ENCODE measurements at regions of chr2 and their contacts with region 1.

Region 1: DNA sequence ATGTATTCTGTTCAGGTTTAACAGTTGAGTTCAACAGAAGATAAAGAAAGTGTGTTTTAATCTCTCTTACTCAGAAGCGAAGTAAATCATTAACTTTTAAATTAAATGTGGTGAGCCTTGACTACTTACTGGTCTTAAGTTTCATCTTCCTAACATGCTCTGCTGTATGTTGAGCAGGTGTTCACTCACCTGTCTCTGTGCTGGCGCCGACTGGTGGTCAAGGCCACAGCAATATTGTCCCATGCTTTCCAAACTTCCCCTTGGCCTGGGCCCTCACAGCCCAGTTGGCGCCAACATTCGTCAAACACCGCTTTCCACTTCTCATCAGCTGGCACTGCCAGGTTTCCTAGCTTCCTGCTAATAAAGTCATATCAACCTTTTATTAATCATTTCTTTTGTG is 17.0 kb upstream of the MPP4 start:
- DNase-seq: no peak
- ATAC-seq: no peak
- H3K4me3 ChIP-seq: no peak overlapping the region
- H3K27ac ChIP-seq: no peak overlapping the region
- H3K4me1 ChIP-seq: no peaks in the 10 kb centered on the region
- H3K27me3 ChIP-seq: no peaks in the 10 kb centered on the region
- CTCF ChIP-seq: no peak

Region 2: GRCh38 chr2:199962203-199962602 is 1753.3 kb before region 1 on chr2:
- intact Hi-C with region 1: loop called in 1 of 2 experiments (anchors 10 kb)
- DNase-seq: no peak
- ATAC-seq: no peak
- H3K4me3 ChIP-seq: no peak overlapping the region
- H3K27ac ChIP-seq: no peak overlapping the region
- H3K4me1 ChIP-seq: peaks cover 9% of the 10 kb centered on the region
- H3K27me3 ChIP-seq: no peaks in the 10 kb centered on the region
- CTCF ChIP-seq: no peak

Region 3: DNA sequence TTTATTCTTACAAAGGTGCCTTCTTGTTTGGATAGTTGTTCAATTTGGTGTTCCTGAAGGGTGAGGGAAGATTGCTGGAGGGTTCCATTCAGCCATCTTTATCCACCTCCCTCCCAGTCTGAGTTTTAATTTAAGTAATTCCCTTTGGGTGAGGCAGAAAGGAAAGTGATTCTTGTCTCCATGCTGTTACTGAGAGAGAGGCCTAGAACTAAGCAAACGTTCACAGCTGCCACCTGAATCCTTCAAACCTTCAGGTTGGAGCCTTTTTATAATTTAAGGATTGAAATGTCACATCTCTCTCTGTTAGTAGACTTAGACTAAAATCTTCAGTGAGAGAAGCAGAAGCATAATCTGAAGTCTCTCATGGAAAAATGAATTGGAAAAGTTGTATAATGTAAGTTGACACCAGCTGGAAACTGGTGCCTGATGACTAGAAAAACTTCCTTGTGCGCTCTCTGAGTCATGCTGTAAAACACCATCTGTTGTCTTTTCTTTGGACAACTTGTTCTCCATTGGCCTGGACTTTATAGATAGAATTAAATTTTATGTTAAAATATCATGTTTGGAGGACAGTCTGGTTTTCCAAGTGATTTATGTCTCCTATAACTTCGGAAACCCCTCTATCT is 249.3 kb before region 1 on chr2:
- intact Hi-C with region 1: loop called (anchors 10 kb)
- DNase-seq: no peak
- ATAC-seq: peak; percentile 72 to 94 (median 80)
- H3K4me3 ChIP-seq: no peak overlapping the region
- H3K27ac ChIP-seq: peak overlapping the region; percentile 63
- H3K4me1 ChIP-seq: peaks cover 12% of the 10 kb centered on the region
- H3K27me3 ChIP-seq: no peaks in the 10 kb centered on the region
- CTCF ChIP-seq: no peak

Region 4: GRCh38 chr2:201642579-201643215 is 72.8 kb before region 1 on chr2:
- intact Hi-C with region 1: loop called in 1 of 2 experiments (anchors 5 kb)
- DNase-seq: peak; percentile 85 to 93
- ATAC-seq: peak; percentile 95 to 97 (median 96)
- H3K4me3 ChIP-seq: peak overlapping the region; percentile 93
- H3K27ac ChIP-seq: peak overlapping the region; percentile 94
- H3K4me1 ChIP-seq: peaks cover 14% of the 10 kb centered on the region
- H3K27me3 ChIP-seq: no peaks in the 10 kb centered on the region
- CTCF ChIP-seq: no peak

Region 5: DNA sequence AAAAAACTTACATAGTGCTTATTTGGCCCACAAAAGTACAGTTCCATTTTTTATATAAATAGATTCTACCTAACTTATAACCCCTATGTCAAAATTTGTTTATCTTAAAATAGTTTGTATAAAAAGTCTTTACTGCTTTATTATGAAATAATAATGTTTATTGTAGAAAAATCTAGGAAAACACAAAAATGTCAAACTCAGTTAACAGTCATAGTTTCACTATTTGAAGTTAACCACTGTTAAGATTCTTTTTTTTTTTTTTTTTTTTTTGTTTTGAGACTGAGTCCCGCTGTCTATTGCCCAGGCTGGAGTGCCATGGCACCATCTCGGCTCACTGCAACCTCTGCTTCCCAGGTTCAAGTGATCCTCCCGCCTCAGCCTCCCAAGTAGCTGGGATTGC is 1586.2 kb after region 1 on chr2:
- intact Hi-C with region 1: loop called in 1 of 2 experiments (anchors 10 kb)
- DNase-seq: no peak
- ATAC-seq: no peak
- H3K4me3 ChIP-seq: no peak overlapping the region
- H3K27ac ChIP-seq: no peak overlapping the region
- H3K4me1 ChIP-seq: no peaks in the 10 kb centered on the region
- H3K27me3 ChIP-seq: no peaks in the 10 kb centered on the region
- CTCF ChIP-seq: no peak